ENCODE measurements at regions of chr19 and their contacts with region 1.

Region 1: DNA sequence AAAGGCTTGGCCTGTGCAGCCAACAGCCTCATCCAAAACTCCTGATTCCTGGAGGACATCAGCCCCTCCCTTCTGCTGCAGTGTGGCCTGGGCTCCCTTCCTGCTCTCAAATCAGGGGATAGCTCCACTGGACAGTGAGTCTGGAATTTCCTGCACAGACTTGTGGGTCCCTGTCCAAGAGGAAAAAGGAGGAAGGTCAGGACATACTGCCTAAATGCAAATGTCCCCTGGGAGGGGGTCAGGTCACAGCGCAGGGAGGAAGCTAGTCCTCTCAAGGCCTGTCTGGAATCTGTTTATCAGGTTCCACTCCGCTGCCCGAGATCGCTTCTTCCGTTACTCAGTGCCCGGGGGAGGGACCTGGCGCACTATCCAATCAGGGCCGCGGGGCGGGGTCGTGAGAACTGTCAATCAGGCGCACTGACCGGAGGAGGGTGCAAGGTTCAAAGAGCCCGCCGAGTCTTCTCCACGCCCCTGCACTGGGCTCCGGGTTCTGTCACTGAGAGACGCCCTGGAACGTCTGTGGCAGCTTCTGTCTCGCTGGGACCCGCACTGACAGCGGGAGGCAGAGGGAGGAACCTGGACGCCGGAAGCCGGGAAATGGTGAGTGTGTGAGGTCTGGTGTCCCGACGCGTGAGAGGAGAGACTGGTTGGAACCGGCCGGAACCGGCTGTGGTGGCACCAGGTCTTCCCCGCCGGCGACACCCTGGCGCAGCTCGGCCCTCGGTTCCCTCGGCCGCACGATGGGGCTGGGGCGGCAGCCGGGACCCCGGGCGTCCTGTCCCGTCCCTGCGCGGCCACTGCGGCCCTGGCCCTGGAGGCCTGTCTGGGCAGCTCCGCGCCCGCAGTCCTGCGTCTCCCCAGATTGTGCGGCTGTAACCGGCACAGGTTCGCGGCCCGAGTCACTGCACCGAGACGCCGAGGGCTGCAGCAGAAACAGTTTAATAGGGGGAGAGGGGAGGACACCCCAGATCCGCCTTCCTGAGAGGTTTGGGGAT is at the start of gene ZNF441:
- DNase-seq: peak; percentile 80 to 96 (median 90)
- ATAC-seq: peak; percentile 93 to 96
- H3K4me3 Mint-ChIP-seq: peak within 1 kb of the TSS; percentile 97 to 99 (median 98)
- H3K27ac Mint-ChIP-seq: peak within 1 kb of the TSS; percentile 95 to 98 (median 97)
- H3K4me1 Mint-ChIP-seq: peaks cover 9 to 27% (median 24%) of the 10 kb centered on the region in 4 donors
- H3K27me3 Mint-ChIP-seq: peaks cover 0 to 6% (median 0%) of the 10 kb centered on the region in 5 donors
- polyA plus RNA-seq, gene ZNF441: 3.6 to 7.0 (median 5.5) TPM

Region 2: GRCh38 chr19:11738746-11739620 is 27.9 kb before region 1 on chr19 and contains the start of gene ZNF823:
- POLR2A ChIA-PET with region 1: interaction called, 21 read pairs
- DNase-seq: peak; percentile 87 to 99 (median 97)
- ATAC-seq: peak; percentile 97 to 99
- H3K4me3 Mint-ChIP-seq: peak within 1 kb of the TSS; percentile 97 to 100 (median 99)
- H3K27ac Mint-ChIP-seq: peak within 1 kb of the TSS; percentile 85 to 99 (median 97)
- H3K4me1 Mint-ChIP-seq: peaks cover 10 to 33% (median 24%) of the 10 kb centered on the region in 4 donors
- H3K27me3 Mint-ChIP-seq: peaks cover 0 to 3% (median 0%) of the 10 kb centered on the region in 5 donors
- polyA plus RNA-seq, gene ZNF823: 2.0 to 3.2 (median 2.8) TPM

Measured in naive thymus-derived CD8-positive, alpha-beta T cell (primary cell).